Naive thymus-derived CD4-positive, alpha-beta T cell (primary cell): ENCODE measurements at regions of chr5 and their contacts with region 1.

Region 1: DNA sequence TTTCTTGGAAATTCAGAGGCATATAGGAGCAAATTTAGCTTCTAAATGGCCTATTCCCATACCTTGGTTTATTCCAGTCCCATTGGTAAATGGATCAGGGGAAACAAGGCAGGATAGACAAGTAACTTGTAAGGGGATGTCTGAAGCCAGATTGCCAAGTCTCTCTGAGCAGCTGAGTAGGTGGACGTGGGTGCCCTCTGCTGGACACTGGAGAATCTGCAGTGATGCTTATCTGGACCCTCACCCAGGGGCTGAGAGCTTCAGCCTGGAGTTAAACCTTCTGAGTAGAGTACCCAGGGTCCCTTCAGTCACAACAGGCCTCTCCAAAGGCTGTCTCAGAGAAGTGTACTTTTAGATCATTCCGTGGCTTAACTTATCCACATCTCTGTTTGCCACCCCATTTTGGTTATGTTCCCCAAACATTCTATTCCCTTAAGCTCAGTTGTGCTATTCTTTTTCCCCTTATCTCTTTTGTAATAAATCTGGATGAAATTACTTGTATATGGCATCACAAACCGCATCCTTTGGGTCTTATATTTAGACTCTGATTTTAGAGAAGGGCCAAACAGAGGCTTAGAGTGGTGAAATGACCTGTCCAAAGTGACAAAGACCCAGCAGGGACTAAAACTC is 218.3 kb upstream of the GLRA1 start:
- DNase-seq: peak; percentile 21 to 56 (median 44)
- ATAC-seq: peak; percentile 73
- H3K4me3 ChIP-seq: no peak overlapping the region
- H3K4me3 Mint-ChIP-seq: no peak overlapping the region
- H3K27ac ChIP-seq: no peak overlapping the region
- H3K27ac Mint-ChIP-seq: no peak overlapping the region
- H3K4me1 ChIP-seq: no peaks in the 10 kb centered on the region
- H3K4me1 Mint-ChIP-seq: peaks cover 0 to 2% (median 0%) of the 10 kb centered on the region in 7 donors
- H3K27me3 ChIP-seq: no peaks in the 10 kb centered on the region
- H3K27me3 Mint-ChIP-seq: peaks cover 0 to 7% (median 0%) of the 10 kb centered on the region in 5 donors

Region 2: GRCh38 chr5:151825445-151825844 is 317.5 kb before region 1 on chr5:
- CTCF ChIA-PET with region 1: interaction called, 163 read pairs
- POLR2A ChIA-PET with region 1: interaction called, 3 read pairs
- intact Hi-C with region 1: loop called (anchors 1 kb)
- DNase-seq: peak in 6 of 9 donors; percentile 2 to 37 (median 22)
- ATAC-seq: peak; percentile 63
- H3K4me3 ChIP-seq: no peak overlapping the region
- H3K4me3 Mint-ChIP-seq: no peak overlapping the region
- H3K27ac ChIP-seq: no peak overlapping the region
- H3K27ac Mint-ChIP-seq: no peak overlapping the region
- H3K4me1 ChIP-seq: no peaks in the 10 kb centered on the region
- H3K4me1 Mint-ChIP-seq: peaks cover 2 to 11% (median 6%) of the 10 kb centered on the region in 7 donors
- H3K27me3 ChIP-seq: no peaks in the 10 kb centered on the region
- H3K27me3 Mint-ChIP-seq: no peaks in the 10 kb centered on the region

Region 3: DNA sequence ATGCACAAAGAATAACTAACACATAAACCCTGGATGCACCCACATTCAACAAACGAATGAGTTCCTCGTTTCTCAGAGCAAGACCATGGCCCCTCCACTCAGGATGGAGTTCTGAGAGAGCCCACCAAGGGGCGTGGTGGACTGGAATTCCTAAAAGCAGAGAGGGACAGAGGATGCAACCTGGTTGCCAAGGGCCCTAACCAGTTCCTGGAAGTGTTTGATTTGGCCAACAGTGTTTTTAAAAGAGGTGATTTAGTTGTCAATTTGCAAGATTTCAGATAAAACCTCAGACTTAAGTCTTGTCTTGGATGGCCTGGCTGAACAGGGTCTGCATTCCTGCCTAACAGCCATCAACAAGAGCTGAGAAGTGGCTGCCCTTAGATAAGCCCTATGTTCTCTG is 252.7 kb before region 1 on chr5:
- CTCF ChIA-PET with region 1: interaction called, 4 read pairs
- POLR2A ChIA-PET with region 1: no interaction called
- intact Hi-C with region 1: loop called in 1 of 2 experiments (anchors 1 kb)
- DNase-seq: no peak
- ATAC-seq: no peak
- H3K4me3 ChIP-seq: no peak overlapping the region
- H3K4me3 Mint-ChIP-seq: no peak overlapping the region
- H3K27ac ChIP-seq: no peak overlapping the region
- H3K27ac Mint-ChIP-seq: no peak overlapping the region
- H3K4me1 ChIP-seq: no peaks in the 10 kb centered on the region
- H3K4me1 Mint-ChIP-seq: no peaks in the 10 kb centered on the region
- H3K27me3 ChIP-seq: no peaks in the 10 kb centered on the region
- H3K27me3 Mint-ChIP-seq: no peaks in the 10 kb centered on the region

Region 4: DNA sequence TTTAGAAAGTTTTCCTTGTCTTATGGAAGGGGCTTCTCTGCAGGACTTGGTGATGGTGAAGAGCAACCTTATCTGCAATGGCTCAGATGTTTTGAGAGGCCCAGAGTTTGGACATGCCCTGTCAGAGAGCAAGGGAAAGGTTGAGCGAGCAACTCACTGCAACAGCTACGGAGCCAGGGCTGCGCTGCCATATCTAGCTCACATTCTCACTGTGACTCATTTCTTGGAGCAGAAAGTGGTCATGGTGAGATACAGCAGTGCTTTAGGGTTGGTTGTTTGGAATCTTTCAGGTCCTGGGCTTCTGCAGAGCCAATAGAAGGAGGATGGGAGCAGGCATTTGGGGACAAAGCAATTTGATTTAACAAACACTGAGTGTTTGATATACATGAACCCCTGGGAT is 230.6 kb before region 1 on chr5:
- CTCF ChIA-PET with region 1: no interaction called
- POLR2A ChIA-PET with region 1: no interaction called
- intact Hi-C with region 1: loop called in 1 of 2 experiments (anchors 10 kb)
- DNase-seq: no peak
- ATAC-seq: no peak
- H3K4me3 ChIP-seq: no peak overlapping the region
- H3K4me3 Mint-ChIP-seq: no peak overlapping the region
- H3K27ac ChIP-seq: no peak overlapping the region
- H3K27ac Mint-ChIP-seq: no peak overlapping the region
- H3K4me1 ChIP-seq: no peaks in the 10 kb centered on the region
- H3K4me1 Mint-ChIP-seq: peaks cover 0 to 4% (median 0%) of the 10 kb centered on the region in 7 donors
- H3K27me3 ChIP-seq: no peaks in the 10 kb centered on the region
- H3K27me3 Mint-ChIP-seq: peaks cover 0 to 18% (median 6%) of the 10 kb centered on the region in 5 donors

Region 5: GRCh38 chr5:152349683-152350526 is 206.9 kb after region 1 on chr5:
- CTCF ChIA-PET with region 1: interaction called, 5 read pairs
- POLR2A ChIA-PET with region 1: no interaction called
- intact Hi-C with region 1: loop called in 1 of 2 experiments (anchors 5 kb)
- DNase-seq: no peak
- ATAC-seq: no peak
- H3K4me3 ChIP-seq: no peak overlapping the region
- H3K4me3 Mint-ChIP-seq: no peak overlapping the region
- H3K27ac ChIP-seq: no peak overlapping the region
- H3K27ac Mint-ChIP-seq: no peak overlapping the region
- H3K4me1 ChIP-seq: no peaks in the 10 kb centered on the region
- H3K4me1 Mint-ChIP-seq: no peaks in the 10 kb centered on the region
- H3K27me3 ChIP-seq: no peaks in the 10 kb centered on the region
- H3K27me3 Mint-ChIP-seq: peaks cover 3 to 13% (median 6%) of the 10 kb centered on the region in 5 donors

Region 6: GRCh38 chr5:152514827-152515397 is 372.0 kb after region 1 on chr5:
- CTCF ChIA-PET with region 1: no interaction called
- POLR2A ChIA-PET with region 1: no interaction called
- intact Hi-C with region 1: loop called in 1 of 2 experiments (anchors 5 kb)
- DNase-seq: no peak
- ATAC-seq: no peak
- H3K4me3 ChIP-seq: no peak overlapping the region
- H3K4me3 Mint-ChIP-seq: no peak overlapping the region
- H3K27ac ChIP-seq: no peak overlapping the region
- H3K27ac Mint-ChIP-seq: no peak overlapping the region
- H3K4me1 ChIP-seq: no peaks in the 10 kb centered on the region
- H3K4me1 Mint-ChIP-seq: peaks cover 0 to 2% (median 0%) of the 10 kb centered on the region in 7 donors
- H3K27me3 ChIP-seq: no peaks in the 10 kb centered on the region
- H3K27me3 Mint-ChIP-seq: peaks cover 10 to 27% (median 20%) of the 10 kb centered on the region in 5 donors